ENCODE measurements at regions of chr1 and their contacts with region 1.

Region 1: GRCh38 chr1:88302843-88303486 is 381.1 kb upstream of the PKN2 start:
- DNase-seq: no peak
- ATAC-seq: no peak
- H3K4me3 ChIP-seq: no peak overlapping the region
- H3K27ac ChIP-seq: no peak overlapping the region
- H3K4me1 ChIP-seq: no peaks in the 10 kb centered on the region
- H3K27me3 ChIP-seq: no peaks in the 10 kb centered on the region

Region 2: GRCh38 chr1:87131809-87132283 is 1171.1 kb before region 1 on chr1:
- intact Hi-C with region 1: loop called in 1 of 2 experiments (anchors 5 kb)
- DNase-seq: peak; percentile 87 to 95
- ATAC-seq: peak; percentile 94
- H3K4me3 ChIP-seq: peak overlapping the region in 1 of 2 donors; percentile 41
- H3K27ac ChIP-seq: no peak overlapping the region
- H3K4me1 ChIP-seq: no peaks in the 10 kb centered on the region
- H3K27me3 ChIP-seq: no peaks in the 10 kb centered on the region